ENCODE measurements at regions of chr1 and their contacts with region 1.

Region 1: DNA sequence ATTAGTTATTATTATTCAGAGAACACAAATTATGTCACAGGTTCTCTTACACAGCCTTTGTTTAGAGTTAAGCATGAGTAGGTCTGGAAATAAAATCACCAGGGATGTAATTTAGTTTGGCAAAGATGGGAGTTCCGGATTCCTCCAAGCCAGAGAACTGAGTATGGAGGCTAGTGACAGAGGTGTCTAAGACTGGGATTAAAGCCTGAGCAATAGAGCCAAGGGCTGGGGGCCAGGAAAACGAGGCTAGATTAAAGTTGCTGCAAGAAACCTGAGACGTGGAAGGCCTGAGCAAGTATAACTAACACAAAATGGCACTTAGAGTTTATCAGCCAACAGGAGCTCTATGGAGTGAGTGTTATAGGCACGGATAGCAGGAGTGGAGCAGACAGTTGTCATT is 381.6 kb downstream of the SRGAP2C start:
- DNase-seq: no peak
- H3K4me3 ChIP-seq: no peak overlapping the region
- H3K27ac ChIP-seq: no peak overlapping the region
- H3K4me1 ChIP-seq: no peaks in the 10 kb centered on the region
- H3K27me3 ChIP-seq: no peaks in the 10 kb centered on the region
- CTCF ChIP-seq: no peak
- POLR2A ChIP-seq: no peak

Region 2: DNA sequence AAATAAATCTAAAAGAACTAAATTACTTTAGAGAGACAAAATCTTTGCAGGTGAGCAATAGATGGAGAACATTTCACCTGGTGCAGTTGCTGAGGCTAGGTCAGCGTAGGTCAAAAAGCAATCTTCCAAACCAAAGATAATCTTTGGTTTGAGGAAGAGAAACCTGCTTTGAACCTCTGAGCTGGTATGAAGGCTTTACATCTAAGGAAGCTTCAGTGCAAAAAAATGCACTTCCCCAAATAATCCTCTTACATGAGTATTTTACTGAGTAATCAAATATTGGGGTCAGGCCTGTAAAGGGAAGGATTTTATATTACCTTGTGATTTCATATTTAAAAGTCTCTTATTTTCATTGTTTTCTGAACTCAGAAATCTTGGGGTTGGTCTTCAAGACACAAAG is 158.0 kb before region 1 on chr1:
- CTCF ChIA-PET with region 1: no interaction called
- POLR2A ChIA-PET with region 1: no interaction called
- dilution Hi-C with region 1: no loop called
- intact Hi-C with region 1: no loop called
- DNase-seq: no peak
- H3K4me3 ChIP-seq: no peak overlapping the region
- H3K27ac ChIP-seq: no peak overlapping the region
- H3K4me1 ChIP-seq: no peaks in the 10 kb centered on the region
- H3K27me3 ChIP-seq: no peaks in the 10 kb centered on the region
- CTCF ChIP-seq: no peak
- POLR2A ChIP-seq: no peak

Region 3: GRCh38 chr1:121443001-121443540 is 123.3 kb before region 1 on chr1:
- CTCF ChIA-PET with region 1: no interaction called
- POLR2A ChIA-PET with region 1: no interaction called
- dilution Hi-C with region 1: no loop called
- intact Hi-C with region 1: loop called (anchors 10 kb)
- DNase-seq: peak; percentile 20
- H3K4me3 ChIP-seq: no peak overlapping the region
- H3K27ac ChIP-seq: no peak overlapping the region
- H3K4me1 ChIP-seq: peaks cover 2% of the 10 kb centered on the region
- H3K27me3 ChIP-seq: no peaks in the 10 kb centered on the region
- CTCF ChIP-seq: no peak
- POLR2A ChIP-seq: no peak

Region 4: GRCh38 chr1:121458291-121459048 is 107.9 kb before region 1 on chr1:
- CTCF ChIA-PET with region 1: no interaction called
- POLR2A ChIA-PET with region 1: no interaction called
- dilution Hi-C with region 1: no loop called
- intact Hi-C with region 1: no loop called
- DNase-seq: no peak
- H3K4me3 ChIP-seq: no peak overlapping the region
- H3K27ac ChIP-seq: no peak overlapping the region
- H3K4me1 ChIP-seq: no peaks in the 10 kb centered on the region
- H3K27me3 ChIP-seq: no peaks in the 10 kb centered on the region
- CTCF ChIP-seq: no peak
- POLR2A ChIP-seq: no peak

Region 5: GRCh38 chr1:121538943-121539575 is 27.3 kb before region 1 on chr1:
- CTCF ChIA-PET with region 1: no interaction called
- POLR2A ChIA-PET with region 1: no interaction called
- dilution Hi-C with region 1: no loop called
- intact Hi-C with region 1: no loop called
- DNase-seq: no peak
- H3K4me3 ChIP-seq: no peak overlapping the region
- H3K27ac ChIP-seq: no peak overlapping the region
- H3K4me1 ChIP-seq: no peaks in the 10 kb centered on the region
- H3K27me3 ChIP-seq: no peaks in the 10 kb centered on the region
- CTCF ChIP-seq: no peak
- POLR2A ChIP-seq: no peak

Region 6: DNA sequence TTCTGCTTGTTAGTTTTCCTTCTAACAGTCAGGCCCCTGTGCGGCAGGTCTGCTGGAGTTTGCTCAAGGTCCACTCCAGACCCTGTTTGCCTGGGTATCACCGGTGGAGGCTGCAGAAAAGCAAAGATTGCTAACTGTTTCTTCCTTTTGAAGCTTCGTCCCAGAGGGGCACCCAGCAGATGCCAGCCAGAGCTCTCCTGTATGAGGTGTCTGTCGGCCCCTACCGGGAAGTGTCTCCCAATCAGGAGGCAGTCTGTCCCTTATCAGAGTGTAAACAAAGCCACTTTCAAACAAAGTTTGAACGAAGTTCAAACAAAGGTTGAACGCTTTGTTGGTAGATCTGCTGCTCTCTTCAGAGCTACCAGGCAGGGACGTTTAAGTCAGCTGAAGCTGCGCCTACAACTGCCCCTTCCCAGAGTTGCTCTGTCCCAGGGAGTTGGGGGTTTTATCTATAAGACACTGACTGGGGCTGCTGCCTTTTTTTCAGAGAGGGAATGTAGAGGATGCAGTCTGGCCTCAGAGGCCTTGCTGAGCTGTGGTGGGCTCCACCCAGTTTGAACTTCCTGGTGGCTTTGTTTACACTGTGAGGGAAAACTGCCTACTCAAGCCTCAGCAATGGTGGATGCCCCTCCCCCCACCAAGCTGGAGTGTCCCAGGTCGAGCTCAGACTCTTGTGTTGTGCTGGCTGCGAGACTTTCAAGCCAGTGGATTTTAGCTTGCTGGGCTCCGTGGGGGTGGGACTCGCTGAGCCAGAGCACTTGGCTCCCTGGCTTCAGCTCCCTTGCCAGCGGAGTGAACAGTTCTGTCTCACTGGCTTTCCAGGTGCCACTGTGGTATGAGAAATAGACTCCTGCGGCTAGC is 20.3 kb after region 1 on chr1:
- CTCF ChIA-PET with region 1: no interaction called
- POLR2A ChIA-PET with region 1: no interaction called
- dilution Hi-C with region 1: no loop called
- intact Hi-C with region 1: no loop called
- DNase-seq: no peak
- H3K4me3 ChIP-seq: no peak overlapping the region
- H3K27ac ChIP-seq: peak overlapping the region; percentile 66
- H3K4me1 ChIP-seq: peaks cover 18% of the 10 kb centered on the region
- H3K27me3 ChIP-seq: no peaks in the 10 kb centered on the region
- CTCF ChIP-seq: no peak
- POLR2A ChIP-seq: no peak